Activated CD4-positive, alpha-beta T cell treated with anti-CD3 and anti-CD28 coated beads, Interleukin-2, amount 10 ng/mL, durations not matched to agents 24 days and 14 days (primary cell): ENCODE measurements at regions of chr1 and their contacts with region 1.

Region 1: GRCh38 chr1:115184951-115185331 is 95.6 kb upstream of the TSPAN2 start:
- DNase-seq: peak; percentile 65
- H3K4me3 Mint-ChIP-seq: peak overlapping the region; percentile 28
- H3K27ac Mint-ChIP-seq: peak overlapping the region; percentile 84
- H3K4me1 Mint-ChIP-seq: peaks cover 9% of the 10 kb centered on the region
- H3K27me3 Mint-ChIP-seq: peaks cover 1% of the 10 kb centered on the region

Region 2: GRCh38 chr1:115168026-115168425 is 16.9 kb before region 1 on chr1:
- intact Hi-C with region 1: loop called (anchors 2 kb)
- DNase-seq: no peak
- H3K4me3 Mint-ChIP-seq: no peak overlapping the region
- H3K27ac Mint-ChIP-seq: no peak overlapping the region
- H3K4me1 Mint-ChIP-seq: no peaks in the 10 kb centered on the region
- H3K27me3 Mint-ChIP-seq: peaks cover 17% of the 10 kb centered on the region

Region 3: DNA sequence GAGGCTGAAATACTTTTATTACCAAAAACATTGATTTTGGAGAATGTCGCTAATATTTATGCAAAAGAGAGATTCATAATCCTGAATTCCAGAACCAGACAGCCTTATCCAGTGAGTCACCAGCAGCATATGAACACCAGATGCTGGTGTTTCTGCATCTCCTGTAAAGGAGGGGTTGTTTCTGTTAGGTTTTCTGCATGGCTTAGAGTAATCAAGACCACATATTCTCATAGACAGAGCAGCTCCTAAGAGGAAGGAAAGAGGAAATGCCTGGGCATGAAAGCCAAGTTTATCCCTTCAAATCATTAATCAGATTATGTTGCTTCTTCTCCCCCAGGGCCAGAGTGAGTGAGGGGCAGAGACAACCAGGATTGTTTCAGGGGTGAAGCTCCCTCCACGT is 66.9 kb after region 1 on chr1:
- intact Hi-C with region 1: no loop called
- DNase-seq: no peak
- H3K4me3 Mint-ChIP-seq: no peak overlapping the region
- H3K27ac Mint-ChIP-seq: no peak overlapping the region
- H3K4me1 Mint-ChIP-seq: no peaks in the 10 kb centered on the region
- H3K27me3 Mint-ChIP-seq: peaks cover 4% of the 10 kb centered on the region

Region 4: DNA sequence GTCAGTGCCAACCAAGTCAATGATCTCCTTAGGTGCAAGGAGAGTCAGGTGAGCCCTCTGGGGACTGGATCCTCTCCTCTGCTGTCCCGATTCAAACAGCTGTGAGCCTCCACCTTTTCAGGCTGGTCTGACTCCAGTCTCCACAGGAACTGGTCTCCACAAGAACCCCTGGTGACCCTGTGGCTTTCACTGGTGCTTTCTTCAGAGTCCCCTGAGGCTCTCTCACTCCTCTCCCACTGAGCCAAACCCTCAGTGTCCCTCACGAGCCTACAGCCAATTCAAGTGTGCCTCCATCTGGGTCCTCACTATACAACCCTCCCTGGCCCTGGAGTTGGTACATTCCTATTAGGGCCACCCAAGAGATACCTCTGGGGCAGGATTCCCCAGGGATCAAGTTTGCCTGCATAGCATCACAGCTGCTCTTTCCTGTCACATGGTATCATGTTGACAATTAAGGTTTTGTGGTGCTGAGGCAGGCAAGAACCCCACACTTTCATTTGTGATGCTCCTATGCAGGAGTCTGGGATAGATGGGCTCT is 158.3 kb after region 1 on chr1:
- intact Hi-C with region 1: no loop called
- DNase-seq: no peak
- H3K4me3 Mint-ChIP-seq: no peak overlapping the region
- H3K27ac Mint-ChIP-seq: no peak overlapping the region
- H3K4me1 Mint-ChIP-seq: no peaks in the 10 kb centered on the region
- H3K27me3 Mint-ChIP-seq: peaks cover 17% of the 10 kb centered on the region

Region 5: GRCh38 chr1:115377411-115377810 is 192.5 kb after region 1 on chr1:
- intact Hi-C with region 1: no loop called
- DNase-seq: no peak
- H3K4me3 Mint-ChIP-seq: no peak overlapping the region
- H3K27ac Mint-ChIP-seq: no peak overlapping the region
- H3K4me1 Mint-ChIP-seq: no peaks in the 10 kb centered on the region
- H3K27me3 Mint-ChIP-seq: peaks cover 1% of the 10 kb centered on the region

Region 6: GRCh38 chr1:115648717-115649691 is 464.1 kb after region 1 on chr1:
- intact Hi-C with region 1: loop called (anchors 1 kb)
- DNase-seq: peak; percentile 77
- H3K4me3 Mint-ChIP-seq: no peak overlapping the region
- H3K27ac Mint-ChIP-seq: no peak overlapping the region
- H3K4me1 Mint-ChIP-seq: peaks cover 3% of the 10 kb centered on the region
- H3K27me3 Mint-ChIP-seq: peaks cover 2% of the 10 kb centered on the region